MCF 10A (cell line): ENCODE measurements at regions of chr13 and their contacts with region 1.

Region 1: DNA sequence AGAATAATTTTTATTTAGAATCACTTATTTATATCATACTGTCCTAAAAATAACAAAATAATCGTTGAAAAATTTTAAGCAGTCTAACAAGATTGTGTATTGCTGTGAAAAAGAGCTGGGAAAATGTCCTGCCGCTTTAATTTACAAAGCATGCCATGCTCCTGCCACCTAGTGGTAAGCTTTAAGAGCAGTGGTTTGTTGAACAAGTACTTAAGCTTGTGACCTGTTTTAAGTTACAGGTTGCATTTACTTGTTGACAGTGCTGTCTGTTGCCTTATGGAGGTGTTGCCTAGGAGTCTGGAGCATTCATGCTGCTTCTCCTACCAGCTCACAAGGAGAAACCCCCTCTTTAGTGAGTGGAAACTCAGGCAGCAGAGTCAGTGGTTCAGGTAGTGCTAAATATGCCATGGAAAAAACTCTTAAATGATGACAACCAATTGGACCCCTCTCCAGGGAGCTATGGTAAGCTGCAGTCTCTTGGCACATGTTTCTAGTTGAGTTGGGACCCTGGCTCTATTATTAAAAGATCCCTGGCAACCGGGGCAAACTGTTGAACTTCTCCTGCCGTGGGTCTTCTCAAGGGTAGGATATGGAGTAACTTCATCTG is 68.4 kb downstream of the SPATA13 start:
- DNase-seq: peak; percentile 68
- H3K4me3 Mint-ChIP-seq: no peak overlapping the region
- H3K27ac Mint-ChIP-seq: no peak overlapping the region
- H3K4me1 Mint-ChIP-seq: no peaks in the 10 kb centered on the region
- H3K27me3 Mint-ChIP-seq: no peaks in the 10 kb centered on the region
- CTCF ChIP-seq: peak; percentile 63

Region 2: GRCh38 chr13:23921451-23921888 is 307.5 kb before region 1 on chr13:
- CTCF ChIA-PET with region 1: interaction called, 10 read pairs
- POLR2A ChIA-PET with region 1: no interaction called
- intact Hi-C with region 1: loop called (anchors 2 kb)
- DNase-seq: peak; percentile 63
- H3K4me3 Mint-ChIP-seq: no peak overlapping the region
- H3K27ac Mint-ChIP-seq: no peak overlapping the region
- H3K4me1 Mint-ChIP-seq: no peaks in the 10 kb centered on the region
- H3K27me3 Mint-ChIP-seq: peaks cover 42% of the 10 kb centered on the region
- CTCF ChIP-seq: peak; percentile 63

Region 3: DNA sequence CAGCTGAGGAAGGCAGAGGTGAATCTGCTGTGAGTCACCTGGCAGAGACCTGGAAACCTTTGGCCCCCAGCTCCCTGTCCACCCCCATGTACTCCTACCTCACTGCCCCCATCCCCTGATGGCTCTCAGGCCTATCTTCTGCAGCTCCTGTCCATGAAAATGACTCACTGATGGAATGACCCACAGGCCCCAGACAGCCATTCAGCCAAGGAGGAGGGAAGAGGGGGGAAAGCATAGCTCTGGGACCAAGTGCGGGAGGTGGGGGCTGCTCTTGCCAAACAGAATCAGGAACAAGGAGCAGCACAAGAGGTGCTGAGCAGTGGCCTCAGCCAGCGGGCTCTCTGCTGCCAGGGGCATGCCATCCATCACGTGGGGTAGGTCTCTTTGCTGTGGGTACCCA is 220.3 kb before region 1 on chr13:
- CTCF ChIA-PET with region 1: interaction called, 16 read pairs
- POLR2A ChIA-PET with region 1: no interaction called
- intact Hi-C with region 1: no loop called
- DNase-seq: no peak
- H3K4me3 Mint-ChIP-seq: no peak overlapping the region
- H3K27ac Mint-ChIP-seq: no peak overlapping the region
- H3K4me1 Mint-ChIP-seq: no peaks in the 10 kb centered on the region
- H3K27me3 Mint-ChIP-seq: peaks cover 24% of the 10 kb centered on the region
- CTCF ChIP-seq: no peak

Region 4: DNA sequence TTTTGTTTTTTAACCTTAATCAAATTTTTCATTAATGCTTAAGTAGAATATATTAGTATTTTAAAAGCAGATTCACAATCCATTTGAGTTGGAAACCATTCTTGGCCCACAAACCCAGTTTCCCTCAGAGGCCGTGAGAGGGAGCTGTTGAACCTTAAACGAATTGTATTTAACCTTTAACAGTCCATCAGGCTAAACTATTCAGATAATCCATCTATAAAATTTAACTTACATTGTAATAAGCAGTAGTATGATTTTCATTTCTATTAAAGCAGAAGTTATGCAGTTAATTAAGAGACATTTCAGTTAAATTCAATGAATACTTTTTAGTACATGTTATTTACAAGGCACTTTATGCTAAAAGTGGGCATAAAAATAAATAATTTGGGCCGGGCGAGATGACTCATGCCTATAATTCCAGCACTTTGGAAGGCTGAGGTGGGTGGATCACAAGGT is 208.6 kb before region 1 on chr13:
- CTCF ChIA-PET with region 1: interaction called, 40 read pairs
- POLR2A ChIA-PET with region 1: interaction called, 4 read pairs
- intact Hi-C with region 1: loop called (anchors 2 kb)
- DNase-seq: peak; percentile 73
- H3K4me3 Mint-ChIP-seq: no peak overlapping the region
- H3K27ac Mint-ChIP-seq: no peak overlapping the region
- H3K4me1 Mint-ChIP-seq: no peaks in the 10 kb centered on the region
- H3K27me3 Mint-ChIP-seq: no peaks in the 10 kb centered on the region
- CTCF ChIP-seq: peak; percentile 57

Region 5: DNA sequence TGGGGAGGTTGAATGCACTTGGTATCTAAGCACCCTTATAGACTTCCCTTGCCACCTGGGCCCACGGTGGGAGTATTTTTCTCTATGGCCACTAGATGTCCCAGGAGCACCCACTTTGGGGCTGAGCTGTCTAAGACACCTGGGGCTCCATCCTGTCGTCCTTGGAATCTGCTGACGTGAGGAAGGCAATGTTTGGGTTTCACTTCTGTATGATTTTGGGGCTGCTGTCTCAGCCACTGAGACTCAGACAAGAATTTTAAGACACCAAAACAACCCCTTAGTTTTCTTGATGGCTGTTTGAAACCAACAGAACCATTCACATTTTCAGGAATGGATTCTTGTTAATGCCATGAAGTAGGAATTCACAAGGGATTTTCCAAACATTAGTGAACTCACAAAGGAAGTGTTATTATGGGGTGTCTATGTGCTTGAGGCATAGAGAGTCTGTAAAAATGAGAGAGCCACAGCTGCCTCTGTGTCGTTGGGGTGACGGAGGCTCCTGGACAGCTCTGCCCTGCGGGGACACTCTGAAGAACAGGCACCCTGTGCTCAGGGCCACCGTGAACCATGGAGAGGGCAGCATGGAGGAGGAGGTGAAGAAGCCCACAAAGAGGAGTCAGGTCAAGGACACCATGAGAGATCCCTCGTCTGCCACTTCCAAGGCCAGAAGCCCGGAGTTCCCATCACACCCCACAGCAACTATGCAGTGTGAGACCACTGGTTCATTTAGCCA is 175.3 kb before region 1 on chr13:
- CTCF ChIA-PET with region 1: interaction called, 16 read pairs
- POLR2A ChIA-PET with region 1: no interaction called
- intact Hi-C with region 1: loop called (anchors 2 kb)
- DNase-seq: peak; percentile 85
- H3K4me3 Mint-ChIP-seq: no peak overlapping the region
- H3K27ac Mint-ChIP-seq: no peak overlapping the region
- H3K4me1 Mint-ChIP-seq: peaks cover 20% of the 10 kb centered on the region
- H3K27me3 Mint-ChIP-seq: no peaks in the 10 kb centered on the region
- CTCF ChIP-seq: peak; percentile 65

Region 6: DNA sequence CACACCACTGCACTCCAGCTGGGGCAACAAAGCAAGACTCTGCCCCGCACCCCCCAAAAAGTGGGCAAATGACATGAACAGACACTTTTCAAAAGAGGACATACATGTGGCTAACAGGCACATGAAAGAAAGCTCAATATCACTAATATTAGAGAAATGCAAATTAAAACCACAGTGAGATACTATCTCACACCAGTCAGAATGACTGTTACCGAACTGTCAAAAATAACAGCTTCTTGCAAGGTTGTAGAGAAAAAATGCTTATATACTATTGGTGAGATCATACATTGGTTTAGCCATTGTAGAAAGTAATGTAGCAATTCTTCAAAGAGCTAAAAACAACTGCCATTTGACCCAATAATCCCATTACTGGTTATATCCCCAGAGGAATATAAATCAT is 168.0 kb before region 1 on chr13:
- CTCF ChIA-PET with region 1: interaction called, 12 read pairs
- POLR2A ChIA-PET with region 1: no interaction called
- intact Hi-C with region 1: no loop called
- DNase-seq: no peak
- H3K4me3 Mint-ChIP-seq: no peak overlapping the region
- H3K27ac Mint-ChIP-seq: no peak overlapping the region
- H3K4me1 Mint-ChIP-seq: no peaks in the 10 kb centered on the region
- H3K27me3 Mint-ChIP-seq: no peaks in the 10 kb centered on the region
- CTCF ChIP-seq: no peak

Region 7: DNA sequence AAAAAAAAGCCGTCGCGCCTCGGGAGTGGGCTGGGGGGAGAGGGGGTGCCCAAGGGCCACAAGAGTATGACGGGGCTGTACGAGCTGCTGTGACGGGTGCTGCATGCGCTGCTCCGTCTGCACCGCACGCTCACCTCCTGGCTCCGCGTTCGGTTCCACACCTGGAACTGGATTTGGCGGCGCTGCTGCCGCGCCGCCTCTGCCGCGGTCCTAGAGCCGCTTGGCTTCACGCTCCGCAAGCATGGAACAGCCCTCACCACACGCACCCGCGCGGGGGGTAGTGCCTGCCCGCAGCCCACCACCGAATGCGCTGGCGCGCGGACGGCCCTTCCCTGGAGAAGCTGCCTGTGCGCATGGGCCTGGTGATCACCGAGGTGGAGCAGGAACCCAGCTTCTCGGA is 99.2 kb after region 1 on chr13:
- CTCF ChIA-PET with region 1: no interaction called
- POLR2A ChIA-PET with region 1: no interaction called
- intact Hi-C with region 1: no loop called
- DNase-seq: no peak
- H3K4me3 Mint-ChIP-seq: no peak overlapping the region
- H3K27ac Mint-ChIP-seq: no peak overlapping the region
- H3K4me1 Mint-ChIP-seq: no peaks in the 10 kb centered on the region
- H3K27me3 Mint-ChIP-seq: peaks cover 14% of the 10 kb centered on the region
- CTCF ChIP-seq: no peak

Region 8: DNA sequence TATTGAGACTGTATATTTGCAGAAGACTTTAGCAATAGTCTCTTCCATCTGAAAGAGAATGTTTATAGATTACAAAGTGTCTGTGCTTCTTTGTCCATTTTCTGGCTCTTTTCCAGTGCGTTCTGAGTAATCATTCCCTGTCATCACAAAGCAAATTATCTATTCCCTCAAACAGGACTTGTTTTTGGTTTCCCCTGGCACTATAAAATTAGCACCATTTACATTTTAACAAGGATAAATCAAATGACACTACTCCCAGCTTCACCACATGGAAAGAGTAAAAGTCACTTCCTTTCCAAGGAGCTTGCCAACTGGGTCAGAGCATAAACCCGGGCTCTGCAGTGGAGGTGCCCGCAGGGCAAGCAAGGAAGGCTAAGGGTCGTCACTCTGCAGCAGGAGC is 1734.7 kb after region 1 on chr13:
- CTCF ChIA-PET with region 1: no interaction called
- POLR2A ChIA-PET with region 1: no interaction called
- intact Hi-C with region 1: no loop called
- DNase-seq: peak; percentile 36
- H3K4me3 Mint-ChIP-seq: no peak overlapping the region
- H3K27ac Mint-ChIP-seq: no peak overlapping the region
- H3K4me1 Mint-ChIP-seq: no peaks in the 10 kb centered on the region
- H3K27me3 Mint-ChIP-seq: no peaks in the 10 kb centered on the region
- CTCF ChIP-seq: no peak